PC-9 (cell line): ENCODE measurements at regions of chr2 and their contacts with region 1.

Region 1: GRCh38 chr2:215269397-215270119 is 42.3 kb upstream of the ATIC start:
- DNase-seq: peak; percentile 61 to 77
- H3K4me3 ChIP-seq: no peak overlapping the region
- H3K27ac ChIP-seq: no peak overlapping the region
- H3K4me1 ChIP-seq: no peaks in the 10 kb centered on the region; the same call in 1 of the 2 replicates
- H3K27me3 ChIP-seq: no peaks in the 10 kb centered on the region
- CTCF ChIP-seq: peak; percentile 98

Region 2: GRCh38 chr2:213792045-213792444 is 1477.5 kb before region 1 on chr2:
- CTCF ChIA-PET with region 1: no interaction called
- POLR2A ChIA-PET with region 1: interaction called, 11 read pairs
- intact Hi-C with region 1: no loop called
- DNase-seq: no peak
- H3K4me3 ChIP-seq: no peak overlapping the region
- H3K27ac ChIP-seq: no peak overlapping the region
- H3K4me1 ChIP-seq: no peaks in the 10 kb centered on the region
- H3K27me3 ChIP-seq: no peaks in the 10 kb centered on the region
- CTCF ChIP-seq: no peak

Region 3: GRCh38 chr2:214960677-214961076 is 308.9 kb before region 1 on chr2:
- CTCF ChIA-PET with region 1: interaction called, 4 read pairs
- POLR2A ChIA-PET with region 1: no interaction called
- intact Hi-C with region 1: loop called (anchors 5 kb)
- DNase-seq: no peak
- H3K4me3 ChIP-seq: no peak overlapping the region
- H3K27ac ChIP-seq: no peak overlapping the region
- H3K4me1 ChIP-seq: no peaks in the 10 kb centered on the region
- H3K27me3 ChIP-seq: no peaks in the 10 kb centered on the region
- CTCF ChIP-seq: peak; percentile 73

Region 4: DNA sequence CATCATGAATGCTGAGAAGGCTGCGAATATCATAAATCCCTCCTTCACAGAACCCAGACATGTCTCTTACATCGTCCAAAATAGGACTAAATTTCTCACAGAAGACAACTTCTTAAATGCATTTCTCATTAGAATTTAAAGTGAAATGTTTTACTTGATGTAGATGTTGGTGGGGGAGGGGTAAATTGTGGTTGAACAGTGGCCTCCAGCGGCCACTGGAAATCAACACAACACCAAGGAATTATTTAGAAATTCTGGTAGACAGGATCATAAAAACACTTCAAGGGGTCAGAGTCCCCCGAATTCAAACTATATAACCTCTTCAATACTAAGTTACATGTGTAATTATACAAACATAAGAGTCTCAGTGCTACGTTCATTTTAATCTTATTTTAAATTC is 267.1 kb before region 1 on chr2:
- CTCF ChIA-PET with region 1: no interaction called
- POLR2A ChIA-PET with region 1: interaction called, 14 read pairs
- intact Hi-C with region 1: no loop called
- DNase-seq: peak in 1 of 2 experiments; percentile 24
- H3K4me3 ChIP-seq: no peak overlapping the region
- H3K27ac ChIP-seq: no peak overlapping the region
- H3K4me1 ChIP-seq: no peaks in the 10 kb centered on the region
- H3K27me3 ChIP-seq: no peaks in the 10 kb centered on the region
- CTCF ChIP-seq: peak; percentile 89

Region 5: GRCh38 chr2:216114714-216115557 is 845.4 kb after region 1 on chr2:
- CTCF ChIA-PET with region 1: no interaction called
- POLR2A ChIA-PET with region 1: no interaction called
- intact Hi-C with region 1: no loop called
- DNase-seq: peak; percentile 96 to 98
- H3K4me3 ChIP-seq: peak overlapping the region; percentile 76
- H3K27ac ChIP-seq: peak overlapping the region; percentile 81
- H3K4me1 ChIP-seq: peaks cover 19% of the 10 kb centered on the region
- H3K27me3 ChIP-seq: no peaks in the 10 kb centered on the region
- CTCF ChIP-seq: peak; percentile 99